ENCODE measurements at regions of chr7 and their contacts with region 1.

Region 1: DNA sequence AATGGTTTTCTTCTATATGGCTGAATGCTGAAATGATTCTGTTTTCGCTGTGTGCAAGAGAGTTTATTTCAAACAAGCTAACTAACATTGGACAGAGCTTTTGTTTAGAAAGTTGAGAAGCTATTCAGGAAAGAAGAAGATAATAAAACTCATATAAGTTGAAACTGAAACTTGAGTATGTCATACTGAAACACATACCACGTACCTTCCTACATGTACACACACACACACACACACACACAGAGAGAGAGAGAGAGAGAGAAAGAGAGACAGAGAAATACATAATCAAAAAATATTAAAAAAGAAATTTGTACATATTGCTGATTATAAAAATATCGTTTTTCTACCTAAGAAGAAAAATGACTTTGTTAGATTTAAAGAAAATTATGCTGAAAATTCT is 561.9 kb upstream of the KCND2 start:
- DNase-seq: no peak
- H3K4me3 ChIP-seq: no peak overlapping the region
- CTCF ChIP-seq: no peak
- POLR2A ChIP-seq: no peak

Region 2: GRCh38 chr7:117916309-117916708 is 1794.8 kb before region 1 on chr7:
- intact Hi-C with region 1: no loop called
- DNase-seq: no peak
- H3K4me3 ChIP-seq: no peak overlapping the region
- CTCF ChIP-seq: no peak
- POLR2A ChIP-seq: no peak

Region 3: DNA sequence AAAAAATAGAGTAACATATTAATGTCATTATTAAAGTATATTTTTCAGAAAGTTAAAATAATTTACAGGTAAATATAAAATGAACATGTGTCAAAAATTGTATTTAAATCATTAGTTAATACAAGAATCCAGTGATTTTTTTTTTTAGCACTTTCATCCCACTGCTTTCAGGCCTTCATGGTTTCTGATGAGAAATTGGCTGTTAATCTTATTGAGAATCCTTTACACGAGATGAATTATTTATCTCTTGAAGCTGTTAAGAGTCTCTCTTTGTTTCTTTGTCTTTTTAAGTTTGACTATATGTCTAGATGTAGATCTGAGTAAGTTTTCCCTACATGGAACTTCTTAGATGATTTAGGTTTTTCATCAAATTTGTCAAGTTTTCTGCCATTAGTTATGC is 16.6 kb before region 1 on chr7:
- intact Hi-C with region 1: no loop called
- DNase-seq: no peak
- H3K4me3 ChIP-seq: no peak overlapping the region
- CTCF ChIP-seq: no peak
- POLR2A ChIP-seq: no peak

Region 4: DNA sequence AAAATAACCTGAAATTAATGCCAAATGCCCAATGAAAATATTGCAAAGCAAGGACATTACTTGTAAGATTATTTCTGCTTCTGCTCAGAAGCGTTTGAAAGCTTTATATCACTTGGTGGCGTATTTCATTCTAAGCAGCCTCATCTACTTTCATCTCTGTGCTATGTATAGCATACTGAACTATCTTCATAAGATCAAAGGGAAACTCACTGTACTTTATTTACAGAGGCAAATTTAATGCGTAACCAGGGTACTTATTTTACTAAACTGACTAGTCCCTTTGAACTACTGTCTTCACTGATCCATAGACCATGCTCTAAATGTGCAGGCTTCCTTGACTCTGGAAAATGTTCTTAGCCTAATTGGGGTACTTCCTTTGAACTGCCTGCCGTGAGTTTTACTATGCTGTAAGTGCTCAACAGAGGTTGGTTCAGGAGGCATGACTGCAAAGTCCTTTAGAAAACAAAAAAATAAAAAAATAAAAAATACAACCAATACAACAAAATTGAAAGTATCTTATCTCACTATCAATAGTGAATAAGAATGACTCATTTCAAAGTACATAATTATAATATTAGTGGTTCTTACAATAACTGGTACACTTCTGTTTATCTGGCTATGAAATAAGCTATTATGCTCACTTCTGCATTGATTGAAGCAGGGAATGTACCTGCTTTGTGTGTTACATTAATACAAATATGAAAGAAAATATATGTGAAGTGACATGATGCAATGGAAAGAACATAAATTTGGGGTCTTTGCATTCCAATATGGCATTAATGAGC is 1187.8 kb after region 1 on chr7:
- intact Hi-C with region 1: loop called (anchors 10 kb)
- DNase-seq: no peak
- H3K4me3 ChIP-seq: no peak overlapping the region
- CTCF ChIP-seq: no peak
- POLR2A ChIP-seq: no peak

Measured in lower leg skin (tissue), 4 donors.